Activated CD4-positive, alpha-beta T cell treated with anti-CD3 and anti-CD28 coated beads for 36 hours (primary cell): ENCODE measurements at regions of chr19 and their contacts with region 1.

Region 1: DNA sequence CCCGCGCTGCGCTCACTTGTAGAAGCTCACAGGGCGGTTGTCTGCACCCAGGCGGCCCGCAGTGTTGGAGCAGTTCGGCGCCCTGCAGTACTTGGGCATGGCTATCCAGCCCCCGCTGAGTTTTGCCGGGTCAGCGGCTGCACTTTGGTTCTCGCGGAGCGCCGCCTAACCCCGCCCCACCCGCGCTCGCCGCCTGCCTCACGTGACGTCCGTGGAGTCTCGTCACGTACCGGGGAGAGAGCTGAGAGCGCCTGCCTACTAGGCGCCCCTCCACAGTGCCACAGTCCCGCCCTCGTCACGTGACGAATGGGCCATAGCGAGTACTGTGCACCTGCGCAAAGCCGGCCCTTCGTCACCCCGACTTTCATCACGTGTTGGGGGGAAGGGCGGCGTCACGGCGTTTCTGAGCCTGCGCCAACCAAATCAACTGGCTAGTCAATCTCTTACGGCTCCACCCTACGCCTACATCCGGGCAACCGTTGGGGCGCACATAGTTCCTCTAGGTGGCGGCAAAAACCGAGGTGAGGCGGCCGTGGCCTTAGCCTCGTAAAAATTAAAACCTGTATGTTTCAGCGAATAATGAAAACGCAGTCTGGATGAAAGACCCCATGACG is at the start of gene THAP8:
- DNase-seq: peak; percentile 100
- ATAC-seq: peak; percentile 91
- H3K4me3 Mint-ChIP-seq: peak within 1 kb of the TSS; percentile 92
- H3K27ac Mint-ChIP-seq: peak within 1 kb of the TSS; percentile 97
- H3K4me1 Mint-ChIP-seq: peaks cover 14% of the 10 kb centered on the region
- H3K27me3 Mint-ChIP-seq: no peaks in the 10 kb centered on the region
- total RNA-seq, gene THAP8: 3.1 to 3.4 TPM

Region 2: DNA sequence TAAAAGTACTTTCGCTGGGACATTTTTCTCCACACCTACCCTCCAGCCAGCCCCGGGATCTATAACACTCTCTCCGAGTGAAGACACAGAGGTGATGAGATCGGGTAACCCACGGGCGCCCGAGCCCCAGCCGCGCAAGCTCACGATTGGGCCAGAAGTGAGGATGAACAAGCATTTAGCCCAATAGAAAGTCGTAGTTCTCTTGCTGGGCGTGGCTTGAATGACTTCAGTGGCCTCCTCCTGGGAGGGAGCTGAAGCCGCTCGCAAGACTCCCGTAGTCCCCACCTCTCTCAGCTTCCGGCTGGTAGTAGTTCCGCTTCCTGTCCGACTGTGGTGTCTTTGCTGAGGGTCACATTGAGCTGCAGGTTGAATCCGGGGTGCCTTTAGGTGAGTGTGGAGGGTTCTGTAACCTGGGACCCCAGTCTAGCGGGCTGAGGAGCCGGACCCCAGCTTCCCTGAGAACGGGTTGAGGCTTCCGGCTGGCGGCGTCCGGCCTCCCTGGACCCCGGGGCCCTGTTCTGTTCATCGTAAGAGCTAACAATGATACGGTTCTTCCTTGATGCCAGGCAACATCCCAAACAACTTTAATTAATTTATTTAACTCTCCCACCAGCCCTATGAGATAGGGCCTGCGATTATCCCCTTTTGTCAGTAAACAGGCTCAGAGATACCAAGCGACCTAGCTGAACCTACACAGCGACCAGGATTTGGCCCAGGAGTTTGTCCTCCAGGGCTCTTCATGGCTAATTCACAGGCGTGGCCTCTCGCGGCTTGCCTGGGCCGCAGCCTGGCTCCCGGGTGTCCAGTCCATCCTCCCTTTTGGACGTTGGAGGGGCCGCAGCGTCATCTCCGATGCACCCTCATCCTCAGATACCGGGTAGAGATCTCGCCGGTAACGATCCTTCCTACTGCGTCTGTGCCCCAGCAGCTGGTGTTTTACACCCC is 405.9 kb before region 1 on chr19 and contains the start of gene COX6B1:
- CTCF ChIA-PET with region 1: no interaction called
- POLR2A ChIA-PET with region 1: no interaction called
- intact Hi-C with region 1: loop called (anchors 1 kb)
- DNase-seq: peak; percentile 95
- ATAC-seq: peak; percentile 76
- H3K4me3 Mint-ChIP-seq: peak within 1 kb of the TSS; percentile 92
- H3K27ac Mint-ChIP-seq: peak within 1 kb of the TSS; percentile 84
- H3K4me1 Mint-ChIP-seq: peaks cover 39% of the 10 kb centered on the region
- H3K27me3 Mint-ChIP-seq: no peaks in the 10 kb centered on the region
- total RNA-seq, gene COX6B1: 385 to 437 TPM

Region 3: GRCh38 chr19:35740423-35741202 is 313.6 kb before region 1 on chr19:
- CTCF ChIA-PET with region 1: no interaction called
- POLR2A ChIA-PET with region 1: no interaction called
- intact Hi-C with region 1: loop called in 1 of 2 experiments (anchors 1 kb)
- DNase-seq: peak; percentile 99
- ATAC-seq: peak; percentile 67
- H3K4me3 Mint-ChIP-seq: peak overlapping the region; percentile 82
- H3K27ac Mint-ChIP-seq: peak overlapping the region; percentile 96
- H3K4me1 Mint-ChIP-seq: peaks cover 28% of the 10 kb centered on the region
- H3K27me3 Mint-ChIP-seq: no peaks in the 10 kb centered on the region

Region 4: DNA sequence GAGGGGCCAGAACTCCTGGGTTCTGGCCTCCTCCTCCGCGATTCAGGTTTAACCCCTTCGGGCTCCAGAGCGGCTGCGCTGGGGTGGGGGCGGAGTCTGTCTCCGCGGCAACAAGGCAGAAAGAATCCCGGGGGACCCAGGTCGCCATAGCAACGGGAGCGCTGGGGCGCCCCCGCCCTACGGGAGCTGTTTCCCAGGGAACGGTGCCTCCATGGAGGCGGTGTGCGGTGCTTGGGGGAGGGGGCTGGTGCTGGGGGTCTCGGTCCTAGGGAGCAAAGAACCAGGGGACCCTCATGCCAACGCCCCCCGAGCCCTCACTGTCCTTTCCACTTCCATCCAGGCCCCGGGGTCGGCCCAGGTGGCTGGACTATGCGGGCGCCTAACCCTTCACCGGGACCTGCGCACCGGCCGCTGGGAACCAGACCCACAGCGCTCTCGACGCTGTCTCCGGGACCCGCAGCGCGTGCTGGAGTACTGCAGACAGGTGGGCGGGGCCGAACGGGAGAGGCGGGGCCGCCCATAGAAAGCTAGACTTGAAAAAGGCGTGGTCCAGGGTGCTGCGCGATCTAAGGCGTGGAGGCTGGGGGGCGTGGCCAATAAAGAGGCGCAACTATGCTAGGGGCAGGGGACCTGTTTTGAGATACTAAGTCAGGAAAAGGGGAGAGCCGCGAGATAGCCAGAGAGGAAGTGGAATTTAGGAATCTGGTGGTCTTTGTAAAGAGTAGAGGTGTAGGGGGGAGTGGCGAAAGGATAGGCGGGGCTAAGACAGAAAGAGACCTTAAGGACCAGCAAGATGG is 184.7 kb before region 1 on chr19:
- CTCF ChIA-PET with region 1: no interaction called
- POLR2A ChIA-PET with region 1: no interaction called
- intact Hi-C with region 1: loop called in 1 of 2 experiments (anchors 1 kb)
- DNase-seq: peak; percentile 95
- ATAC-seq: peak; percentile 93
- H3K4me3 Mint-ChIP-seq: peak overlapping the region; percentile 52
- H3K27ac Mint-ChIP-seq: no peak overlapping the region
- H3K4me1 Mint-ChIP-seq: peaks cover 14% of the 10 kb centered on the region
- H3K27me3 Mint-ChIP-seq: peaks cover 37% of the 10 kb centered on the region

Region 5: DNA sequence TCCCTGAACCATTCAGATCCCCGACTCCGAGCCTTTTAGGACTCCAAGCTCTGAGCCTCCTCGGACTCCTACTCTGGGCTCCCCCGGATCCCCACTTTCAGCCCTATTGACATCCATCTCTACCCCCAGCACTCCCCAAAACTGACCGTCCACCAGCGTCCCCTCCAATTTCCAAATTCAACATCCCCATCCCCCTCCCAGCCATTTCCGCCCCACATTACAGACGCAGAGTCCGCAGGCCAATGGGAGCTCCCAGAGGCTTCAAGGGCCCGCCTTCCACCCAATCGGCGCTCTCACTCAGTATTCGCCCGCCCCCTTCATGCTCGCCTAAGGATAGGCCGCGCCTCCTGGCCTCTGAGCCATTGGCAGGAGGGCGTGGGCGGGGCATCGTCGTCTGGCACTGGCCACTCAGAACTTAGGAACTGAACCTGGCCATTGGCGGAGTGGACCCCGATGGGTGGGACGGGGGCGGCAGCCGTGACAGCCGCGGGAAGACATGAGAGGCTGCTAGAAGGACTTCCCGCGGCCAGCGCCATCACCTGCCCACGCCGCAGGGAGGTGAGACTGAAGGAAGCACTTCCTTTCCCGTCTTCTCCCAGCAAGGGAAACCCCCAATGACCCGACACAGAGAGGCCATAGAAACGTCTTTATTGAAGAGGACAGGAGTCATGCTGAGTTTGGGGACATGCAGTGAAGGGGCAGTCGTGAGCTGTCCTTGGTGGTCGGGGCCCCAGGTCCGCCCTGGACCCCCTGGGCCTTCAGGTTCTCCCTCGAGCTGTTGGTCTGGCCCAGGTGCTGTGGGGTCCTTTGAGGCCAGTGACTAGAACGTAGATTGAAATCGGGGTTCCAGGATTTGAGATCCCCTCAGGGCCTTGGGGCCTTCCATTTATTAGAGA is 39.9 kb before region 1 on chr19 and contains the start of gene ALKBH6:
- CTCF ChIA-PET with region 1: interaction called, 5 read pairs
- POLR2A ChIA-PET with region 1: no interaction called
- intact Hi-C with region 1: loop called (anchors 1 kb)
- DNase-seq: peak; percentile 100
- ATAC-seq: peak; percentile 98
- H3K4me3 Mint-ChIP-seq: peak within 1 kb of the TSS; percentile 96
- H3K27ac Mint-ChIP-seq: peak within 1 kb of the TSS; percentile 94
- H3K4me1 Mint-ChIP-seq: peaks cover 32% of the 10 kb centered on the region
- H3K27me3 Mint-ChIP-seq: no peaks in the 10 kb centered on the region
- total RNA-seq, gene ALKBH6: 40.6 to 42.2 TPM

Region 6: DNA sequence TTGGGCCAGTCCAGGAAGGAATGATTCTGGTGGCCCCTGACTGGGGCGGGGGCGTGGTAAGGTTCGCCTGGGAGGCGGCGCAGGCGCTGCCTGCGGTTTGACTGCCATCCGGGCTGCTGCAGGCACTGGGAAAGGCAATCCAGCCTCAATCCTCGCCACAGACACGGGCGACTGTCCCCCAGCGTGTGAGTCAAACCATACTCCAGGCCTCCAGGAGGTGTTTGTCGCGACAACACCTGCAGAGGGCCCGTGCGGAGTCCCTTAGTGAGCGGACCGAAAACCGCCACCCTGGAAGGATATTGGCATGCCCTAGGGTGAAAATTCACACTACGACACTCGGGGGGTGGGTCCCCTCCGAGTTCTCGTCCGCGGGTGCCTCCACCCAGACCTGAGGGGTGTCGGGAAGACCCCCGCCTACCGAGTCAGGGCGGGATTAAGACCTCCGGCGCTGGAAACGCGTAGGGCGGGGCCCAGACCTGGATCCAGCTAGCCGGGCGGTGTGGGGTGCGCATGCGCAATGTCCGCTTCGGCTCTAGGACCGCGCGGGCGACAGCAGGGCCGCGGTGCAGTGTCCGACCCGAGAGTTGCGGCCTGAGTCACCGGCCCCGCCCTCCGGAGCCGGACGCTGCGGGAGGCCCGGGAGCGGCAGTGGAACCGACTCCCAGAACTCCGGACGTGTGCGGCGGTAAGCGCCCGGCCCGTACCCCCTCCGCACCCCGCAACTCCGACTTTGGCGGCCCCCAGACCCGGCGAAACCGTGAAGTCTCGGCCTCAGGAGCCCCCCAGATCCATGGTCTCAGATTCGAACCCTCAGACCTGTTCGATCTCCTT is 85.5 kb after region 1 on chr19 and contains the start of gene CAPNS1:
- CTCF ChIA-PET with region 1: no interaction called
- POLR2A ChIA-PET with region 1: no interaction called
- intact Hi-C with region 1: loop called in 1 of 2 experiments (anchors 1 kb)
- DNase-seq: peak; percentile 96
- ATAC-seq: peak; percentile 74
- H3K4me3 Mint-ChIP-seq: peak within 1 kb of the TSS; percentile 97
- H3K27ac Mint-ChIP-seq: peak within 1 kb of the TSS; percentile 97
- H3K4me1 Mint-ChIP-seq: peaks cover 26% of the 10 kb centered on the region
- H3K27me3 Mint-ChIP-seq: no peaks in the 10 kb centered on the region
- total RNA-seq, gene CAPNS1: 345 to 452 TPM

Region 7: GRCh38 chr19:36207605-36208252 is 153.5 kb after region 1 on chr19:
- CTCF ChIA-PET with region 1: no interaction called
- POLR2A ChIA-PET with region 1: no interaction called
- intact Hi-C with region 1: no loop called
- DNase-seq: no peak
- ATAC-seq: no peak
- H3K4me3 Mint-ChIP-seq: no peak overlapping the region
- H3K27ac Mint-ChIP-seq: no peak overlapping the region
- H3K4me1 Mint-ChIP-seq: no peaks in the 10 kb centered on the region
- H3K27me3 Mint-ChIP-seq: no peaks in the 10 kb centered on the region

Region 8: DNA sequence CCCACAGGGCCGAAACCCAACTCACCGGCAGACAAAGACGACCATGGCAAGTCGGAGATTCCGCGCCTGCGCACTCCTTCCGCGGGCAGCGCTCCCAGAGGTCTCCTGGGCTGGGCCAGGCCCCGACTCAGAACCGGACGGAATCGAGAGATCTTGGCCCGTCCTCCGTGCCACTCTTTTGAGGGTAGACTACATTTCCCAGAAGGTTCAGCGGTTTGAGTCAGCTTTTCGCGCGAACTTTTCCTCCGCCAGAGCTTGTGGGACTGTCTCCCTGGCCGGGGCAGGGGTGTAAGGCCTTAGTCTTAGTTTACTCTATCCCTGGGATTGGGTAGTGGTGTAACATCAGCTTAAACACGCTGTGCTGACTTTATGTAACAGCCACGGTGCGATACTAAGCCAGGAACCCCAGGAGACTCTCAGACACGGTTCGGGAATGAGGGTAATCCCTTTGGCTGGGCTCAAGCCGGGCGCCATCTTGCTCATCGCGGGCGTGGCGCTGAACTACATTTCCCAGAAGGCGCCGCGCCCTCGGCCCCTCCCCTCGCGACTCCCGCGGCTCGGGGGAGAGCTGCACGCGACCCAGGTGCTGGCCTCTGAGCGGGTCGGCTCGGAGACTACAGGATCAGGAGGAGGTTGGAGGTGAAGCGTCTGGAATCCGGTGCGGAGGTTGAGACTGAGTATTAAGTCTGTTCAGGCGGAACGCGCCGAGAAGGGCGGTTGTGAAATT is 474.1 kb after region 1 on chr19 and contains the start of gene ZNF260:
- CTCF ChIA-PET with region 1: no interaction called
- POLR2A ChIA-PET with region 1: no interaction called
- intact Hi-C with region 1: loop called in 1 of 2 experiments (anchors 1 kb)
- DNase-seq: peak; percentile 97
- ATAC-seq: peak; percentile 91
- H3K4me3 Mint-ChIP-seq: peak within 1 kb of the TSS; percentile 87
- H3K27ac Mint-ChIP-seq: peak within 1 kb of the TSS; percentile 96
- H3K4me1 Mint-ChIP-seq: peaks cover 14% of the 10 kb centered on the region
- H3K27me3 Mint-ChIP-seq: no peaks in the 10 kb centered on the region
- total RNA-seq, gene ZNF260: 5.7 to 8.2 TPM